Dorsolateral prefrontal cortex (tissue), 120 donors: ENCODE measurements at regions of chr1 and their contacts with region 1.

Region 1: DNA sequence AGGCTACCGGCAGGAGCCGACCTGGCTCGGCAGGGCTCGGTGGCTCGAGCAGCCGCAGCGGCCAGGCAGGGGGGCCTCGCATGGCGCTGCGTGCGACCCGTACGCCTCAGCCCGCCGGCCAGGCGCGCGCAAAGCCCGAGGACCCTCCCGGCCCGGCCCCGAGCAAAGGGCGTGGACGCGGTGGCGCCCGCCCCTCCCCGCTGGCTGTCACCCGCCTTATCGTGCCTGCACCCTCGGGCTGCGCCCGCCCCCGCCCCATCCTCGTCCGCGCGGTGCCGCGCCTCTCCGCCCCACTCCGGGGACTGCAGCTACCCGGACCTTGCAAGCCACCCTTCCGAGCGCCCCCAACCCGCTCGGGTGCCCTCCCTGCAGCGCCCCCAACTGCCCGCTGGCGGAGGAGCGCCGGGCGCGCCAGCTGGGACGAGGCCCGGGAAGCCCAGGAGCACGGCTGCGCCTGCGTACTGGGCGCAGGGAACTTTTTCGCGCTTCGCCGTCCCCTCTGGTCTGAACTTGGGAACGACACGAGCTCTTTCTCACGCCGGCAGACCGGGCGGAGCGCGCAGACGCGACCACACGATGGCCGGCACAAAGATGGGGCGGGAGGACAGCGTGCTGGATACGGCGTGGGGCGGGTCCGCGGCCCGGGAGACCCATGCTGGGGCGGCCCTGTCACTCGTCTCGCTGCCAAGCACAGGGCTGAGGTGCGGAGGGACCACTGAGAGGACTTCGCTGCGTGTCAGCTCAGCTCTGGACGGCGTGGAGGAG is at the start of gene ABCB10:
- DNase-seq: peak; percentile 91 to 96 (median 94)
- H3K4me3 ChIP-seq: peak within 1 kb of the TSS; percentile 62 to 94 (median 80)
- H3K27ac ChIP-seq: peak within 1 kb of the TSS; percentile 65 to 98 (median 91)
- H3K27me3 ChIP-seq: no peaks in the 10 kb centered on the region
- CTCF ChIP-seq: peak; percentile 47 to 96 (median 80)
- total RNA-seq, gene ABCB10: 8.5 to 25.0 (median 15.5) TPM

Region 2: GRCh38 chr1:228090613-228091081 is 1468.1 kb before region 1 on chr1:
- intact Hi-C with region 1: no loop called
- DNase-seq: peak in 3 of 10 donors; percentile 29 to 42 (median 32)
- H3K4me3 ChIP-seq: peak overlapping the region in 2 of 59 donors; percentile 2 to 18
- H3K27ac ChIP-seq: peak overlapping the region in 36 of 59 donors; percentile 2 to 82 (median 58)
- H3K27me3 ChIP-seq: no peaks in the 10 kb centered on the region
- CTCF ChIP-seq: no peak

Region 3: GRCh38 chr1:229403573-229403972 is 155.2 kb before region 1 on chr1:
- intact Hi-C with region 1: no loop called
- DNase-seq: no peak
- H3K4me3 ChIP-seq: no peak overlapping the region
- H3K27ac ChIP-seq: no peak overlapping the region
- H3K27me3 ChIP-seq: peaks cover 0 to 5% (median 0%) of the 10 kb centered on the region in 45 donors
- CTCF ChIP-seq: no peak

Region 4: GRCh38 chr1:229440851-229441537 is 117.8 kb before region 1 on chr1:
- intact Hi-C with region 1: no loop called
- DNase-seq: no peak
- H3K4me3 ChIP-seq: no peak overlapping the region
- H3K27ac ChIP-seq: peak overlapping the region in 6 of 59 donors; percentile 3 to 48 (median 22)
- H3K27me3 ChIP-seq: no peaks in the 10 kb centered on the region
- CTCF ChIP-seq: no peak

Region 5: DNA sequence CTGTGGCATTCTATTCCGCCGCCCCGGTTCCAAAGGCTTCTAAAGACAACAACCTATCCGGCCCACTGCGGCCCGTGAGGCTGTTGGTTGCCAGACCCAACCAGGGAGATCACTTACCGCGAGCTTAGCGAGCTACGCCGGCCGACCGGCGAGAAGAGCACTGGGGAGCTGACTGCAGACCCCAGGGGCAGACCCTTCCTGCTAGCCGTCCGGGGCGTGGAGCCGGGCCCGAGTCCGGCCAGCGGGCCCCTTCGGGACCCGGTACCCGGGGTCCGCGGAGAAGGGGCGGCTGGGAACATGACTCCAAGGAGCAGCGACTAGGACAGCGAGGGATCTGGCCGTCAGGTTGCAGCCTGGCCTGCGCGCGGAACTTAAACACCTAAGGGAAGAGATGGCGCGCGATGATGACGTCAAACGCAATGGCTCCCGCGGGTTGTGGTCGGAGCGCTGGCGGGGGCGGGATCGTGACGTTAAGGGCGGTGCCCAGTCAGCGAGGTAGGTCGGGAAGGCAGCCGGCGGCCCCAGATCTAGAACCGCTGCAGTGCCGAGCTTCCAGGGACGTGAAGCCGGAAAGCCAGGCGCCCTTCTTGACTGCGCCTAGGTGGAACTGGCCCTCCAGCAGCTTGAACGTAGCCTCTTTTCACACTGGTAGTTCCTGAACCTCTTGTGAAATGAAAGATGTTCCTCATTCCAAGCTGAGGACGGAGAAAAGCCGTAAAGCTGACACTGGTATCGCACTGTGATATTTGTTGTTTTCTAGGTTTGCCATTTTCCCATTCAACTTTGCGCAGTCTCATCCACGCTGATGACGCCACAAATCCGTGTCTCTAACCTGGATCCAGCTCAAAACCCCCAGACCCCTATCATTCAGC is 50.6 kb before region 1 on chr1 and contains the start of gene NUP133:
- intact Hi-C with region 1: loop called in 1 of 2 experiments (anchors 5 kb)
- DNase-seq: peak; percentile 96 to 99 (median 99)
- H3K4me3 ChIP-seq: peak within 1 kb of the TSS; percentile 75 to 100 (median 99)
- H3K27ac ChIP-seq: peak within 1 kb of the TSS; percentile 78 to 99 (median 95)
- H3K27me3 ChIP-seq: no peaks in the 10 kb centered on the region
- CTCF ChIP-seq: peak in 25 of 56 donors; percentile 6 to 49 (median 29)
- total RNA-seq, gene NUP133: 32.4 to 66.3 (median 46.5) TPM

Region 6: GRCh38 chr1:229514578-229515275 is 44.0 kb before region 1 on chr1:
- intact Hi-C with region 1: loop called (anchors 5 kb)
- DNase-seq: peak; percentile 41 to 85 (median 70)
- H3K4me3 ChIP-seq: peak overlapping the region in 3 of 59 donors; percentile 6 to 22 (median 19)
- H3K27ac ChIP-seq: peak overlapping the region in 6 of 59 donors; percentile 2 to 46 (median 19)
- H3K27me3 ChIP-seq: no peaks in the 10 kb centered on the region
- CTCF ChIP-seq: peak; percentile 56 to 90 (median 82)

Region 7: DNA sequence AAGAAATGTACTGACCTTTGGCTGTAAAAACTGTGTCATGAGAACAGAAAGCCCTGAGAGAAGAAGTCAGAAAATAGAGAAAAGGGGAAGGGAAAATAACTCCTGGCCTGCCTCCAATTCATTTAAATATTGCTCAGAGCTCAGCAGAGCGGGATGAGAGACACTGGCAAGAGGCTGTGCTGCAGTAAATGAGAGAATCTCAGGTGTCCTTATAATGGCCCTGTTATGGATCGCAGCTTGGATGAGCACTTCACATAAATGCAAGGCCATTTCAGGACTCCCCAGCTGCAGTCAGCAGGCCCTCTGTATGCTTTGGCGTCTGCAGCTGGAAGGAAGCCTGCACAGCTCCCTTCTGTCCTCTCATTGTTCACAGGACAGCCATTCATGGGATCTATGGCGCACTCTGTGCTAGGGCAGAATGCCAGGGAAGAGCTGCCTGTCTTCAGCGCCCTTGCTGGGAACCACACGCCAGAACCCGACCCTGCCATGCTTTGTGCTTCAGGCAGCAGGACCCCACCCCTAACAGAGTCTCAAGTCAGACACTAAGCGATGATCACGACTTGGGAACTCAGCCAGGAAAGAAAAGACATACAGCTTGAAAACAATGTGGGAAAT is 20.4 kb after region 1 on chr1:
- intact Hi-C with region 1: loop called (anchors 1 to 2 kb)
- DNase-seq: peak; percentile 41 to 94 (median 88)
- H3K4me3 ChIP-seq: peak overlapping the region in 57 of 59 donors; percentile 8 to 67 (median 42)
- H3K27ac ChIP-seq: peak overlapping the region; percentile 29 to 95 (median 87)
- H3K27me3 ChIP-seq: no peaks in the 10 kb centered on the region
- CTCF ChIP-seq: peak in 21 of 56 donors; percentile 2 to 49 (median 13)

Region 8: DNA sequence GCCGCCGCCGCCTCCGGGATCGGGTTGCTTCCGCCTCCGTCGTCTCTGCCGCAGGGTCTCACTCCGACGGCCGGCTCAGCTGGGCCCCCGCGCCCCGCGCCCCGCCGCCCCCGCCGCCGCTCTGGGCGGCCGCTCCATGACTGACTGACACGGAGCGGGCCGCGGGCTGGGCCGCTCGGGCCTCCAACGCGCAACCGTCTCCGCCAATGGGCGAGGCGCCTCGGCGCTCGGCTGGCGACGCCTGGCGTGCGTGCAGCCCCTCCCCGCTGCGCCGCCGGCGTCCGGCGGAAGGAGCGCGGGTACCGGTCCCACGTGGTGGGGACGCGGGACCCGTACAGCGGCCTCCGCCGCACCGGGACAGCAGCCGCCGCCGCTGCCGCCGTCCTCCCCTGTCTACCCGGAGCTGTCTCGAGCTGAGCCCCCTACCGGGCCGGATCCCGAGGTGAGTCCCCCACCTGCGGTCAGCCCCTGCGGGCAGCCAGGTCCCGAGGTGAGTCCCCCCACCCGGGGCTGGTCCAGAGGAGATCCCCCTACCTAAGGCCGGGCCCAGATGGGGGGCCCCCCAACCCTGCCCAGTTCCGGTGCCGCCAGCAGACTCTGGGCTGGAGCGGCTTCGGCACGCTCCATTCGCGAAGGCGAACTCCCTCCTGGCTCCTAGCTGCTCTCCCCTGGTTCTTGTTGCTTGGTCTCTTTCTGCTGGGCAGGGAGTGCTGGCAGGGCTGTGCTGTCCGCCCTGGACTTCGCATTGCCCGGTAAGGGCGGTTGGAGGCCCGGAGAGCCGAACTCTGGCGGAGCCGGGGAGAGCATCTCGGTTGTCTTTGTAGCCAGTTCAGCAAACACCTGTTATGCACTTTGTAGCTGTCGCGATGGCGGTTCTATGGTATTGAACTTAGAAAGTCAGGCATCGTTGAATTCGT is 67.4 kb after region 1 on chr1 and contains the starts of genes TAF5L and URB2:
- intact Hi-C with region 1: loop called (anchors 1 kb)
- DNase-seq: peak; percentile 75 to 96 (median 88)
- H3K4me3 ChIP-seq: peak within 1 kb of the TSS; percentile 74 to 100 (median 95)
- H3K27ac ChIP-seq: peak within 1 kb of the TSS in 57 of 59 donors; percentile 41 to 95 (median 87)
- H3K27me3 ChIP-seq: no peaks in the 10 kb centered on the region
- CTCF ChIP-seq: peak in 42 of 56 donors; percentile 13 to 56 (median 32)
- total RNA-seq, gene TAF5L: 12.1 to 22.9 (median 17.0) TPM
- total RNA-seq, gene URB2: 5.0 to 12.0 (median 8.2) TPM